ENCODE measurements at regions of chr7 and their contacts with region 1.

Region 1: DNA sequence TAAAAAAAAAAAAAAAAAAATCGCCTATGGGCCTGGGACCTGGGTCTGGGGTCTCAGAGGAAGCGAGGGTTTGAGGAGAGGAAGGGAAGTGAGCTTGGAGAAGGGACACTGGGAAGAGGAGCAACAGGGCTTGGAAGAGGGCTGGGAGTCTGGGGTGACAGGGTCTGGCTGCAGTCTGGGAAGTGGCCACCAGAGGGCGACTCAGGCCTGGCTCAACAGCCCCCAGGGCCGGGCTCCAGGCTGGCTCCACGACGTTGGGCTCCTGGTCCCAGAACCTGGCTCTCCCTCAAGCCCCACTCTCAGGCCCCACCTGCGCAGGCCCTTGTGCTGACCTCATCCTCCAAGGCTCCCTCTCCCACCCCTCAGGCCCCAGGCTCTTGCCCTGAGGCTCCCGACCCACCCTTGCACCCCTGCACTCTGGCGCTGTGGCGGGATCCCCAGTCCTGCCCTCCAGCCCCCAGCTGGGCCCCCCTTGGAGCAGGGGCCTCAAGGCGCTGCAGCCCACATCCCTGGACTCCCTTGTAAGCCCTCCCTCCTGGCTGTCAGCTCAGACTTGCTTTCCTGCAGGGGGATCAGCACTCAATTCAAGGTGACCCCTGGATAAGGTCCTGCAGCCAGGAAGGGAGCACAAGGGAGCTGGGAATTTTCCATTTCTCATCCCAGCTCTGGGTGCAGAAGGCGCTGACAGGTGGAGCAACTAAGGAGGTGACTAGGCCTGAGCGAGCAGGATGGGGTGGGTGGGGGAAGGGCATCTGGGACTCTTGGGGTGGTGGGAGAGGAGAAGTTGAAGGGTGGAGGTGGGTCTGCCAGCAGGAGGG is 5.4 kb upstream of the SPACDR start:
- DNase-seq: peak; percentile 79
- ATAC-seq: peak; percentile 76
- H3K4me3 ChIP-seq: no peak overlapping the region
- H3K27ac ChIP-seq: no peak overlapping the region
- H3K4me1 ChIP-seq: no peaks in the 10 kb centered on the region
- H3K27me3 ChIP-seq: no peaks in the 10 kb centered on the region
- CTCF ChIP-seq: peak; percentile 80

Region 2: GRCh38 chr7:100563809-100564400 is 94.5 kb after region 1 on chr7:
- CTCF ChIA-PET with region 1: interaction called, 8 read pairs
- POLR2A ChIA-PET with region 1: no interaction called
- intact Hi-C with region 1: loop called (anchors 1 kb)
- DNase-seq: peak; percentile 68
- ATAC-seq: peak; percentile 76
- H3K4me3 ChIP-seq: no peak overlapping the region
- H3K27ac ChIP-seq: no peak overlapping the region
- H3K4me1 ChIP-seq: no peaks in the 10 kb centered on the region
- H3K27me3 ChIP-seq: no peaks in the 10 kb centered on the region
- CTCF ChIP-seq: peak; percentile 87

Region 3: DNA sequence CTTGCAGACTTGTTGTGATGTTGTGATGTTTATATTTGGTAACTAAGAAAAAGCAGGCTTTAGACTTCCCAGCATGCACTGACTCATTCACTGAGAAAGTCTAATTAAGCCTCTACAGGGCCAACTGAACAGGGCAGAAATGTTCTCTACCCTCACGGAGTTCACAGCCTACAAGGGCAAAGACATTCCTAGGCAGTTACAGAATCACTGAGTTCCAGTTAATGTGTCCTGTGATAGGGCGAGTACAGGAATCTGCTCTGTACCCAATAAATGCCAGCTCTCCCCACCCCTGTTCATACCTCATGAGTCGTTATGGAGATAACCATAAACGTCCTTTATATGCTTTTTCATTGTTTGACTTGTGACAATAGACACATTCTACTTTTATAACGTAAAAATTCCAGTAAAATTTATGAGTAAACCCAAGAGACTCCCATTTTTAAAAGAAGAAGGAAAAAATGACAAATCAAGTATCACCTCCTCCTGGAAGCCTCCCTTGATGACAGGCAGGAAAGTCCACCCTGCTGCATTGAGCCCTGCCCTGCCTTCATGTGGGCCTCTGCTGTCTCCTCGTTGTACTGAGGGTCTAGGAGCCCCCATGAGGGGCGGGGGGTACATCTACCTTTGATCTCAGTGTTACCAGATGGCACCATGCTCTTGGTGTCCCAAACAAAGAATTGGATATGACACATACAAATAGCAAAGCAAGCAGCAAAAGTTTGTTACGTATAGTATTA is 514.2 kb after region 1 on chr7:
- CTCF ChIA-PET with region 1: no interaction called
- POLR2A ChIA-PET with region 1: no interaction called
- intact Hi-C with region 1: no loop called
- DNase-seq: peak; percentile 87
- ATAC-seq: peak; percentile 91
- H3K4me3 ChIP-seq: no peak overlapping the region
- H3K27ac ChIP-seq: peak overlapping the region; percentile 91
- H3K4me1 ChIP-seq: peaks cover 27% of the 10 kb centered on the region
- H3K27me3 ChIP-seq: no peaks in the 10 kb centered on the region
- CTCF ChIP-seq: no peak